Left ventricle myocardium superior (tissue), 1 donor: ENCODE measurements at regions of chr1 and their contacts with region 1.

Region 1: GRCh38 chr1:204806943-204807687 is 63.5 kb upstream of the NFASC start:
- DNase-seq: peak; percentile 86
- ATAC-seq: peak; percentile 94

Region 2: GRCh38 chr1:204565617-204566582 is 241.2 kb before region 1 on chr1:
- intact Hi-C with region 1: loop called (anchors 5 kb)
- DNase-seq: peak; percentile 41
- ATAC-seq: peak; percentile 85

Region 3: GRCh38 chr1:204858363-204858821 is 51.3 kb after region 1 on chr1:
- intact Hi-C with region 1: no loop called
- DNase-seq: no peak
- ATAC-seq: no peak

Region 4: DNA sequence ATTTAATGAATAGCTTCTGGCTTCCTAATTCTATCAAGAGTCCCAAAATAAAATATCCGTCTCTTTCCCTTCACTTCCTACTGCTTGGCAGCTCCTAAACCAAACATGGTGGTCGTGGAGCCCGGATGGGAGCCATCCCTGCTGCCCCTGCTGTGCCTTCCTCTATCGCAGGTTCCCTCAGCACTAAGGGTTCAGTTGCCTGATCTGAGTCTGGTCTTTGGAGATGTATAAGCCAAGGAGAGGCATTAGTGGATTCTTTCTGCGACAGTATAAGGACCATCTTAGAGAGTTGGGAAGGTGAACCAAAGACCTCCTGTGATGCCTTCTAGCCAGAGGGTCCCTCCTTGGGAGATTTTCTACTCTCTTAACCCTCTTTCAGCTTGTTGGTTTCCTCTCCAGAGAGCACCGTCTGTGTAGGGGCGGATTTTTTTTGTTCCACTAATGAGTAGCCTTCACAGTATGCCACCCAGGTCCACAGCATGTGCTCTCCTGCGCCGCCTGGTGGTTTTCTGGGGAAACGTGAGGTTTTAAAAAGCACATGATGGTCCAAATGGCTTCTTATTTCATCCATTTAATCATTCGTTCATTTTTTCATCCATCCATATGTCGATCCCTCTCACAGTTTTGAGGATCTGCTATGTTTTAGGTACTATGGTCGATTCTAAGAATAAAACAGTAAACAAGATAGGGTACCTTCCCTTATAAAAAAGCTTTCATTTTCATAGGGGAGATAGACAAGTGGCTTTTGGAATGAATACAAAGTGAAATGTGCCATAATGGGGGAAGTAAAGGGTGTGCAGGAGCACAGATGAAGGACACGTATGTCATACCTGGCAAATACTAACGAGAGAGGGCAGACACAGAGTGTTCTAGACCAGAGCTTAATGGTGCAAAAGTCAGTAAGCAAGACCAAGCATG is 134.6 kb after region 1 on chr1:
- intact Hi-C with region 1: loop called (anchors 2 kb)
- DNase-seq: peak; percentile 76
- ATAC-seq: peak; percentile 85